ENCODE measurements at regions of chr2 and their contacts with region 1.

Region 1: DNA sequence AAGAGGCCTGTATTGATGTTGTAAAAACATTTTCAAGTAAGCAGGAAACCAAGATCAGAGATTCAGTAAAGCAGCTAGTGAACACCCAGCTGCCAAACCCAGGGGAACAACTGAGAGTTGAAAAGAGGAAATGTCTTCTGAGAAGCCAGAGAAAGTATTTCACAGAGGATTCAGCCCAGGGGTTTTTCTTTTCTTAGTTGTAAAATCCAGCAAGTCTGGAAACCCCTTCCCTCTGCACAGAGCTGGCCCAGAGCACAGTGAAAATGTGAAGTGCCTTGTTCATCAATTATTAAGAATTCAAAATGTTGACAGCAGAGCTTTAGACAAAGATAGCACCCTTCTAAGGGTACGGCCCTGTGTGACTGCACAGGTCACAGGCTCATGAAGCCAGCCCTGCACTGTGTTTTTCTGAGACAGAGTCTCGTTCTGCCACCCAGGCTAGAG is 28.4 kb downstream of the AFF3 start:
- DNase-seq: no peak
- ATAC-seq: no peak

Region 2: DNA sequence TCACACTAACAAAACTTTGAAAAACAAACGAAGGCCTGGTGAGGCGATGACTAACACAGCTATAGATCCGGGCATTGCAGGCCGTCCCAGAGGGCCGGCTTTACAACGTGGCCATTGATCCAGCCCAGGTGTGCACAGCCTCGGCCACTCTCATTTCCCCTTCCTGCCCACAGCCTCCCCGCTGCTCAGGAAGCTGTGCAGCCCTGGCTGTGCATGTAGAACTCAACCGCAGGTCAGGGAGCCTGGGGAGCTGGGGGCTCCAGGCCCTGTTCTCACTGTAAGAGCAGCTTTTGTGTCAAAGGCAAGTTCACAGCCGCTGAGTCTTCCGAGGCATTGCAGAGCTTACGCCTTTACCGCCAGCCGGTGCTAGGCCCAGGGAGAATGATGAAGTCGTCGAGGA is 121.1 kb after region 1 on chr2:
- intact Hi-C with region 1: loop called in 1 of 2 experiments (anchors 10 kb)
- DNase-seq: no peak
- ATAC-seq: no peak

Region 3: GRCh38 chr2:100321181-100321865 is 207.3 kb after region 1 on chr2:
- intact Hi-C with region 1: no loop called
- DNase-seq: peak; percentile 34
- ATAC-seq: peak; percentile 62 to 65

Region 4: GRCh38 chr2:101396316-101396717 is 1282.3 kb after region 1 on chr2:
- intact Hi-C with region 1: no loop called
- DNase-seq: no peak
- ATAC-seq: no peak